ENCODE measurements at regions of chr2 and their contacts with region 1.

Region 1: GRCh38 chr2:190382851-190383250 is 25.3 kb upstream of the MFSD6 start:
- DNase-seq: peak; percentile 40 to 80
- ATAC-seq: peak; percentile 79 to 80; a peak in 5 of 6 replicates
- H3K4me3 ChIP-seq: no peak overlapping the region
- H3K27ac ChIP-seq: no peak overlapping the region
- H3K4me1 ChIP-seq: peaks cover 12% of the 10 kb centered on the region
- CTCF ChIP-seq: peak; percentile 68
- EP300 ChIP-seq: no peak
- POLR2A ChIP-seq: no peak
- RAD21 ChIP-seq: peak; percentile 77 to 81

Region 2: DNA sequence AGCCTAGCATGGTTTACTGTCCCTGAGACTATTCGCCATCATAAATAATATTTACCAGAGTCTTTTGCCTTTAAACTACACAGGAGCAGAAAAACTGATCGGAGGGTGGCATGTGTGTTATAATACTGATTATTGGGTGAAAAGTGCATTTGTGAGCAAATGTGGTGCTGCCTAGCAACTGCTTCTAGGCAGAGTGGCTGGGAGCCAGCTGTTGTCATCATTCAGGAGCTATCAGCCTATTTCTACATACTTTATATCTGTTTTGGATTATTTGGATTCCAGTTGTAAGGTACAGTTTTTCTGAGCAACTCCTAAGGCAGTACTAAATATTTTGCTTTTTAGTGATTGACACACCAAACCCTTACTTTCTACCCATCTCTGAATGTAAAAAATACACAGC is 245.3 kb before region 1 on chr2:
- CTCF ChIA-PET with region 1: no interaction called
- POLR2A ChIA-PET with region 1: no interaction called
- DNase-seq: no peak
- ATAC-seq: no peak
- H3K4me3 ChIP-seq: no peak overlapping the region
- H3K27ac ChIP-seq: no peak overlapping the region
- H3K4me1 ChIP-seq: peaks cover 20% of the 10 kb centered on the region
- CTCF ChIP-seq: no peak
- EP300 ChIP-seq: no peak
- POLR2A ChIP-seq: no peak
- RAD21 ChIP-seq: no peak

Region 3: GRCh38 chr2:190396271-190396670 is 13.4 kb after region 1 on chr2:
- CTCF ChIA-PET with region 1: interaction called, 12 read pairs
- POLR2A ChIA-PET with region 1: no interaction called
- DNase-seq: no peak
- ATAC-seq: no peak
- H3K4me3 ChIP-seq: no peak overlapping the region
- H3K27ac ChIP-seq: no peak overlapping the region
- H3K4me1 ChIP-seq: no peaks in the 10 kb centered on the region
- CTCF ChIP-seq: no peak
- EP300 ChIP-seq: no peak
- POLR2A ChIP-seq: no peak
- RAD21 ChIP-seq: no peak

Measured in A549 (cell line).